CD4-positive, alpha-beta T cell (primary cell): ENCODE measurements at regions of chr19 and their contacts with region 1.

Region 1: DNA sequence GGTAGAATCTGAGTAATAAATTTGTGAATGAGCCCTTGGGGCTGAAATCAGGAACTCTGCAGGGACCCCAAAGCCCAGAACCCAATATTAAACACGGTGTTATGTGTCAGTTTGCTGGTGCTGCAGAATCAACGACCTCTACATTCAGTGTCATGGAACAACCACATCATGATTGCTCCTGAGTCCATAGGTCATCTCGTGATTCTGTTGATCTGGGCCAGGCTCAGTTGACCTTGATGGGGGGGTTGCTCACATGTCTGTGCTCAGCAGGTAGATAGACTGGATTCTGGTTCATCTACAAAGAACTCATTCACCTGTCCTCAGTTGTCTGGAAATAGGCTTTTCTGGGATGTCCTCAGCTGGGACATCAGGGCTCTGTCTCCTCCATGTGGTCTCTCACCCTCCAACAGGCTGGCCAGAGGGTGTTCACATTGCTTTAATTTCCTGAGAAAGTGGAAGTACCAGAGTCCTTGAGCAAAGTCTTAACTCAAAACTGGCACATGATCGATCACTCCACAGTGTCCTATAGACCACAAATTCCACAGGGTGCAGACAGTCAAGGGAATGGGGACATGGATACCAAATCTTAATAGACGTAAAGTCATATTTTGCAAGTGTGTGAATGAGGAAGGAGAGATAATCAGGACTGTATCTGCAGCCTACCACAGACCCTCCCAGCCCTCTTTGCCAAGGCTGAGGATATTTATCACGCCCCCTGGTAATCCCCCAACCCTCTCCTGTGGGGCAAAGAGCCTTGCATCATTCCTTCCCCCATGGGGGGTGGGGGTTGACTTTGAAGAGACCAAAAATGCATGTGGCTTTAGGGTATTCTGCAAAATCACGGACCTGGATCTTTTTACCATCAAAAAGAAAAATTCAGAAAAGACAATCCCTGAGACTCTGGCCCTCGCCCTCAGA is 39.3 kb upstream of the IGFL1 start:
- DNase-seq: no peak
- ATAC-seq: no peak
- H3K4me3 ChIP-seq: no peak overlapping the region
- H3K4me3 Mint-ChIP-seq: no peak overlapping the region
- H3K27ac ChIP-seq: no peak overlapping the region
- H3K27ac Mint-ChIP-seq: no peak overlapping the region
- H3K4me1 ChIP-seq: no peaks in the 10 kb centered on the region
- H3K4me1 Mint-ChIP-seq: no peaks in the 10 kb centered on the region
- H3K27me3 ChIP-seq: peaks cover 16 to 38% of the 10 kb centered on the region in 2 experiments
- H3K27me3 Mint-ChIP-seq: peaks cover 68% of the 10 kb centered on the region
- CTCF ChIP-seq: no peak

Region 2: GRCh38 chr19:46030812-46031550 is 159.2 kb before region 1 on chr19:
- CTCF ChIA-PET with region 1: interaction called, 4 read pairs
- POLR2A ChIA-PET with region 1: no interaction called
- intact Hi-C with region 1: loop called in 1 of 2 experiments (anchors 1 kb)
- DNase-seq: no peak
- ATAC-seq: no peak
- H3K4me3 ChIP-seq: no peak overlapping the region
- H3K4me3 Mint-ChIP-seq: no peak overlapping the region
- H3K27ac ChIP-seq: no peak overlapping the region
- H3K27ac Mint-ChIP-seq: no peak overlapping the region
- H3K4me1 ChIP-seq: peaks cover 13% of the 10 kb centered on the region
- H3K4me1 Mint-ChIP-seq: peaks cover 14% of the 10 kb centered on the region
- H3K27me3 ChIP-seq: peaks cover 0 to 6% of the 10 kb centered on the region in 2 experiments
- H3K27me3 Mint-ChIP-seq: peaks cover 22% of the 10 kb centered on the region
- CTCF ChIP-seq: no peak